OCI-LY7 (cell line): ENCODE measurements at regions of chr7 and their contacts with region 1.

Region 1: DNA sequence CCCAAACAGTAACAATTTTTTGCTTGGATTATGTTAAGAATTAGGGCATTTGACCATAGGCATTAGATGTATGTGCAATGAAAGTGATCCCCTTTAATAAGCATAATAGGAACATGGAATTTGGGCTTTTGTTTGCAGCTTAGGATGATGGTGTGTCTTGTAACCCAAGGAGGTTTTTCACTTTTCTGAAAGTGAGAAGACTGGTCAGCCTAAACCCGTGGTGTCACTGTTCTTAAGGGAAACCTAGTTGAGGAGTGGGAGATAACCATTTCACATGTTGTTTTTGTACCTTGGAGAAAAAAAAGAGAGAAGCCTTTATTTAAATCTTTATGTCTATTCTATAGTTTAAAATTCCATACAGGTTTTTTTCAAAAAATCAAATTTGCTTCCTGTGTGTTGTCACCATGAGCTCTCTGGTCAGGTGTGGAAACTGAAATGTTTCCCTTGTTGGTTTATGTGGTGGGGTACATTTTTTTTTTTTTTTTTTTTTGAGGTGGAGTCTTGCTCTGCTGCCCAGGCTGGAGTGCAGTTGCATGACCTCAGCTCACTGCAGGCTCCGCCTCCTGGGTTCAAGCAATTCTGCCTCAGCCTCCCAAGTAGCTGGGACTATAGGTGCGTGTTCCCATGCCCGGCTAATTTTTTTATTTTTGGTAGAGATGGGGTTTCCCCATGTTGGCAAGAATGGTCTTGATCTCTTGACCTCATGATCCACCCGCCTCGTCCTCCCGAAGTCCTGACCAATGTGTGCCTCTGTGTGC is 7.7 kb downstream of the CCM2 start:
- DNase-seq: no peak
- H3K4me3 ChIP-seq: no peak overlapping the region
- H3K27ac ChIP-seq: peak overlapping the region; percentile 48
- H3K4me1 ChIP-seq: peaks cover 53% of the 10 kb centered on the region
- CTCF ChIP-seq: no peak

Region 2: GRCh38 chr7:45021604-45022296 is 14.0 kb after region 1 on chr7:
- CTCF ChIA-PET with region 1: interaction called, 4 read pairs
- POLR2A ChIA-PET with region 1: interaction called, 29 read pairs
- intact Hi-C with region 1: no loop called
- DNase-seq: no peak
- H3K4me3 ChIP-seq: no peak overlapping the region
- H3K27ac ChIP-seq: peak overlapping the region; percentile 23
- H3K4me1 ChIP-seq: peaks cover 50% of the 10 kb centered on the region
- CTCF ChIP-seq: no peak